Activated CD4-positive, alpha-beta T cell treated with anti-CD3 and anti-CD28 coated beads, Interleukin-2, amount 10 ng/mL, durations not matched to agents 24 days and 14 days (primary cell): ENCODE measurements at regions of chr21 and their contacts with region 1.

Region 1: GRCh38 chr21:33199516-33200217 is 30.1 kb upstream of the IFNAR2 start:
- DNase-seq: peak; percentile 93
- H3K4me3 Mint-ChIP-seq: no peak overlapping the region
- H3K27ac Mint-ChIP-seq: no peak overlapping the region
- H3K4me1 Mint-ChIP-seq: peaks cover 25% of the 10 kb centered on the region
- H3K27me3 Mint-ChIP-seq: peaks cover 23% of the 10 kb centered on the region

Region 2: DNA sequence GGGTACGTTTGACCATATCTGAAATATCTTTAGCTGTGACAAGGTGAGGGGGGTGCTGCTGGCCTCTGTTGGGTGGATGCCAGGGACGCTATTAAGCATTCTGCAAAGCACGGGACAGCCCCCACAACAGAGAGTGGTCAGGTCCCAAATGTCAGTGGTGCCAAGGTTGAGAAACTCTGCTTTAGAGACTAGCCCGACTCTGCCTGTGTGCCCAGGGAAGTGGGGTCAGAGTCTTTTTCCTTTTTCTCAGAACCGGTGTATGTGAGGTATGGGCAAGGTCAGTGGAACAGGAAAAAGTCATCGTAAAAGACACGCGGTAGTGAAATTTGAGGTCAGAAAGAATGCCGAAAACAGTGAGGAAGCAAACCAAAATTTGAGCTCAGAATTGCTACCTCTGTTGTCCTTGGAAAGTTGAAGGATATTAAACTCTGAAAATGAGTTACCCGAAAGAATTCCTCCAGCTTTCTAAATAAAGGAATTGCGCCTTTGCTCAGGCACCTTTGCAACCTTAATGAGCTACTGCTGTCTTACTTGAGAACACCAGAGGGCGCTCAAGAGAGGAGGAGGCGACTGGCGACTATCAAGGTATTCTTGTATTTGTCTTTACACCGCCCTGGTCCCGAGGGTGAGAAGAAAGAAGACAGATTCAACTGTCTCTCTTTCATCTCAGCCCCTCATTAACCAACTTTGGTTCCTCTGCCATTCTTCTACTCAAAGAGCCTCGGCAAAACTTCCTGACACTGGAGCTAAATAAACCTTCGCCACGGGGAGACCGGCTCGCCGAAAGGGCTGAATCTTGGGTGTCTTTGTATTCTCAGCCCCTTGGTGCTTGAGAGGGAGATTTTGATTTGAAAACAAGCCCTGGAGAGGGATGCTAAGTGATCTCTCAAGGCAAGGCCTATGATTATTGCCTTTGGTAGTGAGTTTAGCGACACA is 259.3 kb before region 1 on chr21:
- intact Hi-C with region 1: loop called (anchors 1 kb)
- DNase-seq: peak; percentile 80
- H3K4me3 Mint-ChIP-seq: no peak overlapping the region
- H3K27ac Mint-ChIP-seq: no peak overlapping the region
- H3K4me1 Mint-ChIP-seq: no peaks in the 10 kb centered on the region
- H3K27me3 Mint-ChIP-seq: peaks cover 7% of the 10 kb centered on the region

Region 3: DNA sequence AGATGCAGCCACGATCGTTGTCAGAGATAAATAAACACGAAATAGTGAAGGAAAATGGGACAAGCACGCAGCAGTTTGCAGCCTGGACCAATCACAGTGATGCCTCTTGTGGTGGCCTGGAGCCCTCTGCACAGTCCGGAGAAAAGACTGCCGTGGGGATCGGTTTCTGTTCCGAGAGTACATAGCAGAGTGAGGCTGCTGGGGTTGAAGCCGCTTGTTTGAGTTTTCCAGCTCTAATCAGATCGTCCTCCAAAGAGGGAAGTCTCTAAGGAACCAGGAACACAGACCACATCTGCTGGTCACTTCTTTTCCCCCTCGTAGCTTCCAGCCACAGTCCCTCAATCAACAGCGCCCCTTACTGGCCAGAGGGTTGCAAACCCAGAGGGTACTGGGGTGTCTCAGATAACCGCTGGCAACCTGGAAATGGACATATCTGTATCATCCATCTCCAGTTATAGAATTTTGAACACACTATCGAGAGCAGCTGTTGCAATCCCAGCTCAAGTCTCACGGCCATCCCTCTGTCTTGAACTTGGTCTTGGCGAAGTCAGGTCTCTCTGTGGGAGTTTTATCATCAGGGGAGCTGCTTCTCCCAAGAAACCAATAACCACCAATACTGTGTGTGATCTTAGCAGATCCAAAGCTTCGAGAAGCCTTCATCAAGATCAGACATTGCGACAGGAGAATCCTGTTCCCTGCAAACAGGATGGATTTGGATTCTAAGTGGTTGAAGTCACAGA is 72.3 kb before region 1 on chr21:
- intact Hi-C with region 1: loop called (anchors 2 kb)
- DNase-seq: peak; percentile 86
- H3K4me3 Mint-ChIP-seq: peak overlapping the region; percentile 58
- H3K27ac Mint-ChIP-seq: no peak overlapping the region
- H3K4me1 Mint-ChIP-seq: peaks cover 5% of the 10 kb centered on the region
- H3K27me3 Mint-ChIP-seq: peaks cover 22% of the 10 kb centered on the region

Region 4: DNA sequence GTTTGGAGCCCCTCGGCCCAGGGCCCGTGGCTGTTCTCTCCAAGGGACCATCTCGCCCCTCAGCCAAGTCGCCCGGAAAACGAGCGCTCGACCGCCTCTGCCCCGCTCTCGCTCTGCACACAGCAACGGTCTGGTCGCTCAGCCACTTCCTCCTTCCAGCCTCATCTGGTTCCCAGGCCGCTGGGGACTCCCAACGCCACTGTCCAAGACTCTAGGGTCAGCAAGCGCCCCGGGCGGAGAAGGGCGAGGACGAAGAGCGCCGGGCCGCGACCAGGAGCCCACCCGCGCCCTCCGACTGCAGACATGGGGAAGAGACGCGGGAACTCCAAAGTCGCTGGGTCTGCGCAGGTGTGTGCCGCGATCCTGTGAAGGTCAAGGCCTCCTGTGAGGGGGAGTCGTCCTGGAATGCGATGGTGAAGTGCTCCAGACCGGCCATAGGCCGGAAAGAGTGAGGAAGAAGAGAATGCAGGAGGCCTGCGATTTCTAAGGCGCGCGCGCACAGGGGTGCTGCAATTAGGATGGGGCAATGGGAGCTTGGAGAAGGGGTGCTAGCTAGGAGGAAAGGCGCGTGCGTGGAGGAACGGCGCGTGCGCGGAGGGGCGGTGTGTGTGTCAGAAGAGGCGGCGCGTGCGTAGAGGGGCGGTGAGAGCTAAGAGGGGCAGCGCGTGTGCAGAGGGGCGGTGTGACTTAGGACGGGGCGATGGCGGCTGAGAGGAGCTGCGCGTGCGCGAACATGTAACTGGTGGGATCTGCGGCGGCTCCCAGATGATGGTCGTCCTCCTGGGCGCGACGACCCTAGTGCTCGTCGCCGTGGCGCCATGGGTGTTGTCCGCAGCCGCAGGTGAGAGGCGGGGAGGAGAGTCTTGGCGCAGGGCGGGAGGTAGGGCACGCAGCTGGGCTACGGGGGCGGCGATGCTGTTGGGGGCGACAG is 124.9 kb after region 1 on chr21 and contains the start of gene IFNAR1:
- intact Hi-C with region 1: loop called (anchors 1 kb)
- DNase-seq: peak; percentile 99
- H3K4me3 Mint-ChIP-seq: no peak within 1 kb of the TSS
- H3K27ac Mint-ChIP-seq: no peak within 1 kb of the TSS
- H3K4me1 Mint-ChIP-seq: peaks cover 19% of the 10 kb centered on the region
- H3K27me3 Mint-ChIP-seq: peaks cover 4% of the 10 kb centered on the region
- total RNA-seq, gene IFNAR1: 19.0 and 24.0 TPM in 2 replicates

Region 5: GRCh38 chr21:33374450-33375096 is 174.9 kb after region 1 on chr21:
- intact Hi-C with region 1: loop called (anchors 1 kb)
- DNase-seq: peak; percentile 86
- H3K4me3 Mint-ChIP-seq: no peak overlapping the region
- H3K27ac Mint-ChIP-seq: peak overlapping the region; percentile 36
- H3K4me1 Mint-ChIP-seq: peaks cover 7% of the 10 kb centered on the region
- H3K27me3 Mint-ChIP-seq: peaks cover 28% of the 10 kb centered on the region